Mammary epithelial cell (primary cell): ENCODE measurements at regions of chr1 and their contacts with region 1.

Region 1: DNA sequence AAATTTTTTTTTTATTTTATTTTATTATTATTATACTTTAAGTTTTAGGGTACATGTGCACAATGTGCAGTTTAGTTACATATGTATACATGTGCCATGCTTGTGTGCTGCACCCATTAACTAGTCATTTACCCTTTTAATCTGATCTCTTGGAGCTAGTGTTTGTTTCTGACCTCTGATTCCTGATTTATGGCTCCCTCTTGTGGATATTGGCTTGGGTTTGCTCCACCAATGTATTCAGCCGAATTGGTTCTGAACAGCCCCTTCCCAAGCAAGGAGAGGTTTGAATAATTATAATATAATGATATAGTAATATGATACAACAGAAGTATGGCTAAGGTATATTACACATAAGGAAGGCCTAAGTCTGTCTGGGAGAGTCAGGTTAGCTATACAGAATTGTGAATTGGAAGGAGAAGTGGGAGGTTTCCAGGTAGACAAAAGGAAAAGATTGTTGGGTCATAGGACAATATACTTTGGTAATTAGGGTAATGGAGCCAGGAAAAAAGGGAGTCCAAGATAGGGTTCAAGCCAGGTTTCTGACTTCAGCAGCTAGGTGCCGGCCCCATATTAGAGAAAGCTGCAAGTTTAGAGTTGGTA is 53.1 kb upstream of the HMCN1 start:
- DNase-seq: peak; percentile 41
- H3K4me3 ChIP-seq: no peak overlapping the region
- H3K27ac ChIP-seq: no peak overlapping the region
- H3K4me1 ChIP-seq: no peaks in the 10 kb centered on the region
- H3K27me3 ChIP-seq: no peaks in the 10 kb centered on the region
- CTCF ChIP-seq: peak; percentile 67 to 68

Region 2: GRCh38 chr1:184982002-184982954 is 698.9 kb before region 1 on chr1:
- CTCF ChIA-PET with region 1: no interaction called
- dilution Hi-C with region 1: no loop called
- in situ Hi-C with region 1: no loop called
- intact Hi-C with region 1: loop called (anchors 5 kb)
- DNase-seq: peak; percentile 58
- H3K4me3 ChIP-seq: no peak overlapping the region
- H3K27ac ChIP-seq: no peak overlapping the region
- H3K4me1 ChIP-seq: no peaks in the 10 kb centered on the region
- H3K27me3 ChIP-seq: peaks cover 2% of the 10 kb centered on the region
- CTCF ChIP-seq: peak; percentile 94 to 98